OCI-LY7 (cell line): ENCODE measurements at regions of chr9 and their contacts with region 1.

Region 1: GRCh38 chr9:97900738-97901565 is 21.3 kb downstream of the TRMO start:
- DNase-seq: peak; percentile 48
- H3K4me3 ChIP-seq: no peak overlapping the region
- H3K27ac ChIP-seq: no peak overlapping the region
- H3K4me1 ChIP-seq: no peaks in the 10 kb centered on the region
- CTCF ChIP-seq: peak; percentile 98

Region 2: DNA sequence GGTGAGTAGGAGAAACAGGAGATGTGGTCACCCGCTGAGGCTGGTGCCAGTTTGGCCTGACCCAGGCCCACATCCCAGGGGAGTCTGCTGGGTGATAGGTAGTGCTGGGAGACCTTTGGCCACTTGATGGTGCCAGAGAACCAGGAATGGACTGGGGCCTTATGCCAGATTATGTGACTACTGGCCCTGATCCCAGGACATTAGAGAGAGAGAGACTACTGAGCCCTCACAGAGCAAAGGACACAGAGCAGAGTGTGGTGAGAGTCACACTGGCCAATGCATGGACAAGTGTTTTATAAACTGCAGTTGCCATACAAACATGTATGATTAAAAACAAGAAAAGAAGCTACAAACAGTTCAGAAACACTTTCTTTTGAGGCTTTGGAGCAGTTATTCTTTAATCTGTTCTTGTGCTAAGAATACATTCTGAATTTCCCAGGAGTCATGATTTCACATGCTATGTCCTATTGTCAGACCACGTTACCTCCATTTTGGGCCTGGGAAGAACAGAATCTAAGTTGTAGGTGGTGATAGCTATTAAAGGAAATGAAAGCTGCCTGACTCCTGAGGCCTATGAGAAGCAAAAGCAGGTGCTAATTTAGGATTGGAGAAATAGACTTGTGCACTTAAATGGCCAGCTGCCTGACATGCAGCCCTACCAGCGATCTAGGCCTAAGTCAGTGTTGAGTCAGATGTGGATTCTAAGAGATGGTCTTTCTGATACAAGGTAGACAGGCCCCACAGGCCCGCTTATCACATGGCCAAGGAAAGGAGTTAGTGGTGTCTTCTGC is 432.1 kb before region 1 on chr9:
- CTCF ChIA-PET with region 1: no interaction called
- POLR2A ChIA-PET with region 1: no interaction called
- intact Hi-C with region 1: loop called (anchors 5 kb)
- DNase-seq: peak; percentile 50
- H3K4me3 ChIP-seq: no peak overlapping the region
- H3K27ac ChIP-seq: no peak overlapping the region
- H3K4me1 ChIP-seq: no peaks in the 10 kb centered on the region
- CTCF ChIP-seq: peak; percentile 79

Region 3: DNA sequence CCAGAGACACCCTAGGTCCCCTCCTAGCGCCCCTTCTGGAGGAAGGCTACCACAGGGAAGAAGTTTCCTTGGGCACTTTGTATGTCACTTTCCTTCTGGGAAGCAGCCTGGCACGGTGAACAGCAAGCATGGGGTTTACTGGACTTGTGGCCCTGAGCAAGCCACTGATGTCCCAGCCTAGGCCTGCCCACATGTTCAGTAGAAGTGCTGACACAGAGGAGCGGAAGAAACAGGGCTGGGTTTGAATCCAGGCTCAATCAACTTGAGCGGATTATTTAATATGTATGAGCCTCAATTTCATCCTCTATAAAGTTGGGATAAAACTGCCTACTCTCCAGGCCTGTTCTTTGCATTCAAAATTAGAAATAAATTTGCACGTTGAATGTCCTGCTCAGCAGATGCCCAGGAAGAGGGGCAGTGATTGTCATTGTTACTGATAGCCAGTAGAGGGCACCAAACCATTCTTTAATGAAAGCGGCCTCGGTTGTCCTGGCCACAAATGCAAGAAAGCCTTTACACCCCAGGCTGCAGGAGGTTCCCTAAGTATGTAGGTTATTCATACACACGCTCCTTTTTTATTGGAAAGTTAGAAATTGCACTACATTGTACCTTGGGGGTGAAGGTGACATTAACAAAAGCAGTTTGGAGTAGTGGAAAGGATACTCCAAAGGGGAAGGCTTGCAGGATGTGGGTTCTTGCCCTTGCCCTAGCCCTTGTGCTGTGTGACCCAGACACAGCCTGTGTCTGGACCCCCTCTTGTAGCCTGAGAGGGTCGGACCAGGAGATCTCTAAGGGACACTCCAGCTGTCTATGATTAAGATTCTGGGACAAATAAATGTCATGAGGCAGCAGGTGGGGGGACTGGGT is 190.4 kb before region 1 on chr9:
- CTCF ChIA-PET with region 1: no interaction called
- POLR2A ChIA-PET with region 1: no interaction called
- intact Hi-C with region 1: loop called (anchors 1 kb)
- DNase-seq: peak; percentile 74
- H3K4me3 ChIP-seq: no peak overlapping the region
- H3K27ac ChIP-seq: no peak overlapping the region
- H3K4me1 ChIP-seq: no peaks in the 10 kb centered on the region
- CTCF ChIP-seq: peak; percentile 95

Region 4: DNA sequence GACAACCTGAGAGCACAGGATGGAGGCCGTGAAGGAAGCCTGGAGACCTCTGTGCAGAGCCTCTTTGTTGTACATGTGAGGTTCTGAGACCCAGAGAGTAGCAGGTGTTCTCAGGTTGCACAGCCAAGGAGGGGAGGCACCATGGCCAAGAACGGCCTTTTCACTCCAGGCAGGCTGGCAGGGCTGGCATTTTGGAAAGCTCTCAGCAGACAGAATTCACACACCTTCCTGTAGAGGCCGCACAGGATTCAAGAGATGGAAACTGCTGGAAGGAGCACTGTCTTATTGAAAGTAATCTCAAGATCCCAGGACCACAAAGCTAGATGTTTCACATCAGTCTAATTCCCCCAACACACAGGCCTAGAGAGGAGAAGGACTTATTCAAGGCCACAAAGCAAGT is 151.0 kb before region 1 on chr9:
- CTCF ChIA-PET with region 1: no interaction called
- POLR2A ChIA-PET with region 1: no interaction called
- intact Hi-C with region 1: no loop called
- DNase-seq: no peak
- H3K4me3 ChIP-seq: no peak overlapping the region
- H3K27ac ChIP-seq: no peak overlapping the region
- H3K4me1 ChIP-seq: no peaks in the 10 kb centered on the region
- CTCF ChIP-seq: no peak